ENCODE measurements at regions of chr7 and their contacts with region 1.

Region 1: DNA sequence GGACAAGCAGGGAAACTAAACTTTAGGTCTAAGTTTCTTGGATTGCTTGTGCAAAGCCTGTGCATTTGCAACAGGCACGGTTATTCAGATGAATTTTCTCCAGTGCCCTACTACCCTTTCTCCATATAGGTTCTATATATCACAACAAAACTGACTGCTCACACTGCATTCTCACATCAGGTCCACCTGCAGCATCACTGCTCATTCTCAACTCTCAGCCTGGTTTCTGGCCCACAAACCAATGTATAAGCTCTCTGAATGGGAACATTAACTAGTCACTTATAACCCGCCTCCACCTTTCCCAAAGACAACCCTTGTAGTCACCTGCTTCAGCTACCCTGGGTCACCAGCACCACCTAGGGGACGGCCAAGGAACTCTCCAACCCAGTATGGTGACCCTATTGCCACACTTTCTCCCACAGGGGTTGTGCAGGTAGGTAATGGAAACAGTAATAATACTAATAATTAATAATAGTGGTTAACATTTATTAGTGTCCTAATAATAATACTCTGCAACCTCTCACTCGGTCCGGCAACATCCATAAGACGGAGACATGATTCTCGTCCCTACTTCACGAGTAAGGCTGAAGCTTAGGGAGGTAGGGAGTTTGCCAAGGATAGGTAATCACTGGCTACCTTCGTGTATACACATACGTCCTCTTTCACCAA is 97.3 kb downstream of the CLEC2L start:
- DNase-seq: peak; percentile 74
- H3K4me3 Mint-ChIP-seq: no peak overlapping the region
- H3K27ac Mint-ChIP-seq: no peak overlapping the region
- H3K4me1 Mint-ChIP-seq: peaks cover 29% of the 10 kb centered on the region
- H3K27me3 Mint-ChIP-seq: no peaks in the 10 kb centered on the region

Region 2: GRCh38 chr7:139431010-139431409 is 189.8 kb before region 1 on chr7:
- CTCF ChIA-PET with region 1: interaction called, 15 read pairs
- DNase-seq: no peak
- H3K4me3 Mint-ChIP-seq: no peak overlapping the region
- H3K27ac Mint-ChIP-seq: no peak overlapping the region
- H3K4me1 Mint-ChIP-seq: peaks cover 4% of the 10 kb centered on the region
- H3K27me3 Mint-ChIP-seq: no peaks in the 10 kb centered on the region

Region 3: DNA sequence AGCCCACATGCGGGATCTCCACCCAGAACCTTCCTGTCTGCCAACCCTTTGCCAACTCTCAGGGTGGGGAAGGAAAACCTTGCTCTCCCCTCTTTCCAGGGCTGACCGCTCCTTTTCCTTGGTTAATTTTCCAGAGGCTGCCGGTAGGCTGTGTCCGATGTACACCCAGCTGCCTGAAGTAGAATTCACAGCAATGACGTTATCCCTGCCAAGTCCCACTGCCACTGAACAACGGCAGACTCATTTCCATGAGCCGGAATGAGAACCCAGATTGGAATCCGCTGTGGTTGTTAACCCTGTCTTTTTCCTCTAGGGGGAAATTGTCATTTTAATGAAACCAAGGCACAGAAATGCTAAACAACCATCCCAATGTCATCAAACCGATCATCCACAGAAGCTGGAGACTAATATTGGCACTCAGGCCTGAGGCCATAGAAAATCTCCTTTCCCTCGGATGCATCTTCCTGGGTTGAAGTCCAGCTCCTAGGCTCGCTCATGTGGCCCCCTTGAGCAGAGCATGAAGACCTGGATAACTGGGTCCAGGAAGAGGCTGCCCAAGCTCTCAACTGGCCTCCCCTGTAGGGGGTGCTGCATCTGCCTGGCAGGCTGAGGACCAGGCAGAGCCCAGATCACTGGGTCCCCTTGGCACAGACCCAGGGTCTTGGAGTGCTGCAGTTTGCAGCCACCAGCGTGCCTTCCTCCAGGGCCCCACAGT is 167.7 kb before region 1 on chr7:
- CTCF ChIA-PET with region 1: no interaction called
- DNase-seq: no peak
- H3K4me3 Mint-ChIP-seq: no peak overlapping the region
- H3K27ac Mint-ChIP-seq: no peak overlapping the region
- H3K4me1 Mint-ChIP-seq: no peaks in the 10 kb centered on the region
- H3K27me3 Mint-ChIP-seq: peaks cover 6% of the 10 kb centered on the region

Region 4: DNA sequence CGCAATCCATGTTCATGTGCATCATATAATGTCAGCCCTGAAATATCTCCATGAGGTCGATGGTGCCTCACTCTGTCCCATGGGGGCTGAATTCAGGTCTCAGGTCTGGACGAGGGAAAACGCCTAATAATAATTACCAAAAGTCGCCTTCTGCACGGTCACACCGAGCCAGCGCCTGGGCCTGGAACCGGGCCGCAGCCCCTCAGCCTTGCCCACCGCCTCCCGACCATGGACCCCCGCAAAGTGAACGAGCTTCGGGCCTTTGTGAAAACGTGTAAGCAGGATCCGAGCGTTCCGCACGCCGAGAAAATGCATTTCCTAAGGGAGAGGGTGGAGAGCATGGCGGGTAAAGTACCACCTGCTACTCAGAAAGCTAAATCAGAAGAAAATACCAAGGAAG is 118.6 kb before region 1 on chr7:
- CTCF ChIA-PET with region 1: interaction called, 10 read pairs
- DNase-seq: no peak
- H3K4me3 Mint-ChIP-seq: no peak overlapping the region
- H3K27ac Mint-ChIP-seq: no peak overlapping the region
- H3K4me1 Mint-ChIP-seq: peaks cover 5% of the 10 kb centered on the region
- H3K27me3 Mint-ChIP-seq: peaks cover 17% of the 10 kb centered on the region

Region 5: DNA sequence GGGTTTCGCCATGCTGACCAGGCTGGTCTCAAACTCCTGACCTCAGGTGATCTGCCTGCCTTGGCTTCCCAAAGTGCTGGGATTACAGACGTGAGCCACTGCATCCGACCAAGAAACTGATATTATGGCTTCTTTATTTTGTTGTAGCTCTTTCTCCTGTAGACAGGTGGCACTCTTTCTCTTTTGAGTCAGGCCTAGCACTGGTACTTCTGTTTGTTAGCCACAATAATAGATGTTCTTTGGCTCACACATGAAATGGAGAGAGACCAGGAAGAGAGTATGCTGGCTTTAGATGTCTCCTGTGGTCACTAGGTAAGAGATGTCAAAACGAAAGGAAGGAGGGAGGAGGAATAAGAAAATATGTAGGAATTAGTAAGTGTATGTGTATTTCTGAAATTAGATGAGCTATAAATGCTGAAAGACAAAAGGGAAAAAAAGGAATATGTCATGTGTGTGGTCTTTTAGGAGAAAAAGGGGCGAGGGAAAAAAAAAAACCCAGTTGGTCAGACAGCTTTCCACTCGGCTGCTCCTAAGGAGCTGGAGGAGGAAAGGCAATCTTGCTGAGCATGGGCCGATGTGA is 18.6 kb before region 1 on chr7:
- CTCF ChIA-PET with region 1: interaction called, 21 read pairs
- DNase-seq: no peak
- H3K4me3 Mint-ChIP-seq: no peak overlapping the region
- H3K27ac Mint-ChIP-seq: no peak overlapping the region
- H3K4me1 Mint-ChIP-seq: no peaks in the 10 kb centered on the region
- H3K27me3 Mint-ChIP-seq: no peaks in the 10 kb centered on the region

Region 6: GRCh38 chr7:139635526-139636302 is 14.9 kb after region 1 on chr7:
- CTCF ChIA-PET with region 1: interaction called, 17 read pairs
- DNase-seq: peak; percentile 74
- H3K4me3 Mint-ChIP-seq: peak overlapping the region; percentile 57
- H3K27ac Mint-ChIP-seq: peak overlapping the region; percentile 91
- H3K4me1 Mint-ChIP-seq: peaks cover 47% of the 10 kb centered on the region
- H3K27me3 Mint-ChIP-seq: no peaks in the 10 kb centered on the region

Region 7: GRCh38 chr7:139645572-139646523 is 25.0 kb after region 1 on chr7:
- CTCF ChIA-PET with region 1: interaction called, 46 read pairs
- DNase-seq: peak; percentile 89
- H3K4me3 Mint-ChIP-seq: no peak overlapping the region
- H3K27ac Mint-ChIP-seq: no peak overlapping the region
- H3K4me1 Mint-ChIP-seq: peaks cover 75% of the 10 kb centered on the region
- H3K27me3 Mint-ChIP-seq: no peaks in the 10 kb centered on the region

Region 8: DNA sequence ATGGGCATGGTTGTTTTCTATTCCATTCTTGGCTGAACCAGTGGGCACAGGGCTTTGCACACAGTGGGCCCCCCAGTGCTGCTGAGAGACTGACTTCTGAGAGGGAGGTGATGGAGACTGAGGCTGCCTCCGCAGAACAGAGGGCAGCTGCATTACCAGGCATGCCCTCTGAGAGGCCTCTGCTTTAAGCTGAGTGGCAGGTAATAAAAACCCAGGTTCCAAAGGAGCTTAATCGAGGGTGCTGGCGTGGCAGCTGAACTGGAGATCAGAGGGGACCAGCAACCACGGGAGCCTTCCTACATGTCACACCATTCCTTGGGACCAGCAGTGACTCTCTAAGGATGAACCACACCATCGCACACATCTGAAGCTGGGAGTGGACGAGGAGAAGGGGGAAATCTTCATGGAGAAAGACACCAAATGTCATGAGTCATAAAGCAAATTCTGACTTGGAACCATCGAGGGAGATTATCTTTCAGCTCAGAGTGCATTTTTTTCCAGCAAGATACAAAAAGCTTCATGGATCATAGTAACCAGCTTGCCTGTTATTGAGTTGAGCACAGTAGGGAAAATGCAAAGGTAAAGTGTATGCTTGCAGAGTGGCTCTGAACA is 132.4 kb after region 1 on chr7:
- CTCF ChIA-PET with region 1: no interaction called
- DNase-seq: no peak
- H3K4me3 Mint-ChIP-seq: no peak overlapping the region
- H3K27ac Mint-ChIP-seq: no peak overlapping the region
- H3K4me1 Mint-ChIP-seq: peaks cover 12% of the 10 kb centered on the region
- H3K27me3 Mint-ChIP-seq: peaks cover 12% of the 10 kb centered on the region

Region 9: DNA sequence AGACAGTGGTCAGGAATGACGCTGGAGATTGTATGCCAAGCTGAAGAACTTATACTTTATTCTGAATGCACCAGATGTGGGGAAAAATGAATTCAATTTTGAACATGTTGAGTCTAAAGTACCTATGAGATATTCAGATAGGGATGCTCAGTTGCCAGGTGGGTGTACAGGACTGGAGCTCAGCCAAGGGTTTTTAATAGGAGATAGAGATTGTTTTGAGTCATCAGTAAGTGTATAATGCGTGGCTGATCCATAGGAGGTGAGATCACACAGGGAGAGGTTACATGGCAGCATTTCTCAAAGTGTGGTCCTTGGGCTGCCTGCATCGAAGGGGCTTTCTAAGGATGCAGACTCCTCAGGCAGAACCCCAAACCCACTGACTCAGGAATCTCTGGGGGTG is 163.8 kb after region 1 on chr7:
- CTCF ChIA-PET with region 1: no interaction called
- DNase-seq: no peak
- H3K4me3 Mint-ChIP-seq: no peak overlapping the region
- H3K27ac Mint-ChIP-seq: no peak overlapping the region
- H3K4me1 Mint-ChIP-seq: no peaks in the 10 kb centered on the region
- H3K27me3 Mint-ChIP-seq: peaks cover 20% of the 10 kb centered on the region

Region 10: GRCh38 chr7:140003913-140004382 is 383.1 kb after region 1 on chr7:
- CTCF ChIA-PET with region 1: interaction called, 15 read pairs
- DNase-seq: peak; percentile 46
- H3K4me3 Mint-ChIP-seq: no peak overlapping the region
- H3K27ac Mint-ChIP-seq: no peak overlapping the region
- H3K4me1 Mint-ChIP-seq: no peaks in the 10 kb centered on the region
- H3K27me3 Mint-ChIP-seq: no peaks in the 10 kb centered on the region

Measured in activated naive CD4-positive, alpha-beta T cell treated with anti-CD3 and anti-CD28 coated beads, Interleukin-2, amount 10 ng/mL, durations not matched to agents 7 days and 5 days (primary cell).